ENCODE measurements at regions of chr3 and their contacts with region 1.

Region 1: DNA sequence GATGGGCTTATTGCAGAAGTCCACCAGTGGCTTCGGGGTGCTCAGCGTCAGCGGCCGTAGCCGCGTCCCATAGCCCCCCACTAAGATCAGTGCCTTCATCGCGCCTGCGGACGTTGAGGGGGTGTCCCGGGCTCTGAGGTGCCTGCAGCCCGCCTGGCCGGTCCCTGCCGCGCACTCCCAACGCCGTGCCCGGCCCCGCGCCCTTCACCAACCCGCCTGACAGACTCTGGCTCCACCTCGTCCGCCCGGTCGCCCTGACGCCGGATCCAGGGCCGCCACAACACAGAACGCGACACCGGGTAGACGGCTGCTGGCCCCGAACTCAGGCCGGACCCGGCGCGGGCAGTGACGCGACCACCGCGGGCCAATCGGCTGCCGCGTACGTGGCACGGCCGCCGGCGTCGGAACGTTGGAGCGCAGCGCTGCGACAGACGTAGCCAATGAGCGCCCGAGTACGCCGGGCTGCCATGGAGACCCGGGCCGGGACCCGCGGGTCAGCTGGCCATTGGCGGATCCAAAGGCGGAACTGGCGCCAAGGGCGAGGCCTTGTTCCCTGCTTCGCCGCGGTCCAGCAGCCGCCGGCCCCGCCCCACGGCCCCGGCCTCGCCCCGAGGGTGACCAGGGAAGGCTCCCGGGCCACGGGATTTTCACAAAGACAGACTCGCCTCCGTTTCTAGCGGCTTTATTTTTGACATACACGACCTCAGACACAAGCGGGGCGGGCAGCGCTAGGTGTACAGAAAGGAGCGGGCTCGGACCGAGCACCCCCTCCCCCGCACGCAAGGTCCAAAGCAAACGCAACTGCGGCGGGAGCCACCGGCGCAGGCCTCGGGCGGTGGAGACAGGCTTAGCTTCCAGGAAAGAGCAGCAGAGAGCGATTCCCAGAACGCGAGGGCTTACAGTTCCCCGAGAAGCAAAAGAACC is at the start of gene GMPPB:
- DNase-seq: peak; percentile 89
- ATAC-seq: peak; percentile 79
- H3K4me3 Mint-ChIP-seq: peak within 1 kb of the TSS; percentile 93
- H3K27ac Mint-ChIP-seq: peak within 1 kb of the TSS; percentile 98
- H3K4me1 Mint-ChIP-seq: peaks cover 59% of the 10 kb centered on the region
- H3K27me3 Mint-ChIP-seq: no peaks in the 10 kb centered on the region
- CTCF ChIP-seq: no peak
- total RNA-seq, gene GMPPB: 39.9 and 40.7 TPM in 2 replicates

Region 2: GRCh38 chr3:49673715-49674496 is 50.0 kb before region 1 on chr3 and contains the start of gene APEH:
- CTCF ChIA-PET with region 1: interaction called, 3 read pairs
- POLR2A ChIA-PET with region 1: interaction called, 7 read pairs
- intact Hi-C with region 1: loop called (anchors 1 kb)
- DNase-seq: peak; percentile 98
- ATAC-seq: peak; percentile 88
- H3K4me3 Mint-ChIP-seq: peak within 1 kb of the TSS; percentile 91
- H3K27ac Mint-ChIP-seq: peak within 1 kb of the TSS; percentile 98
- H3K4me1 Mint-ChIP-seq: peaks cover 22% of the 10 kb centered on the region
- H3K27me3 Mint-ChIP-seq: no peaks in the 10 kb centered on the region
- CTCF ChIP-seq: no peak
- total RNA-seq, gene APEH: 109 and 113 TPM in 2 replicates

Region 3: GRCh38 chr3:49747792-49748480 is 24.0 kb after region 1 on chr3:
- CTCF ChIA-PET with region 1: no interaction called
- POLR2A ChIA-PET with region 1: interaction called, 12 read pairs
- intact Hi-C with region 1: no loop called
- DNase-seq: no peak
- ATAC-seq: no peak
- H3K4me3 Mint-ChIP-seq: no peak overlapping the region
- H3K27ac Mint-ChIP-seq: no peak overlapping the region
- H3K4me1 Mint-ChIP-seq: no peaks in the 10 kb centered on the region
- H3K27me3 Mint-ChIP-seq: no peaks in the 10 kb centered on the region
- CTCF ChIP-seq: no peak

Region 4: DNA sequence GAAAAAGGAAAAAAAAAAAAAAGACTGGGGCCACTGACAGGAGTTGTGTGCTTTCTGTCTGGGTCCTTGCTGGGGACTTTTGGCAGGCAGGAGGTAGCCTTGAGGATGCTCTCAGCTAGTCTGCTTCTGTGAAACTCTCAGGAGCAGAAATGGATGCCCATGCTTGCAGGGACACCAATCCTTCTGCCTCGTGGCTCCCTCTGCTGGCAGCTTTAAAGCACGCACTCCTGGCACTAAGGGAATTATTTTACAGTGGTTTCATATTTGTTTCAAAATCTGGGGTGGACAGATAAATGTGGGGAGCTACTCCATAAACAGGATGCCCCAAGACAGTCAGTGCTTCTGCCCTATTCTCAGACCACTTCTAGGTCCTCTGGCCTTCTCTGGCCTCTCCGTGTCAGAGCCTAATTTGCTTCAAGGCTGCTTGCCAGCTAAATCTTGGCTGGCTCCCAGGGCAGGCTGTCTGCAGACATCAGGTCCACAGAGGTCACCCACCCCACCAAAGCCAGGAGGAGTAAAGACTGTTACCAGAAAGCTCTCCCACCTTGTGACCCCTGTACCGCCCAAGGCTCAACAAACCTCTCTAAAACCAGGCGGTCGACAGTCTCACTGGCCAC is 115.4 kb after region 1 on chr3:
- CTCF ChIA-PET with region 1: interaction called, 8 read pairs
- POLR2A ChIA-PET with region 1: interaction called, 4 read pairs
- intact Hi-C with region 1: loop called (anchors 1 kb)
- DNase-seq: peak; percentile 65
- ATAC-seq: peak; percentile 97
- H3K4me3 Mint-ChIP-seq: no peak overlapping the region
- H3K27ac Mint-ChIP-seq: peak overlapping the region; percentile 24
- H3K4me1 Mint-ChIP-seq: peaks cover 5% of the 10 kb centered on the region
- H3K27me3 Mint-ChIP-seq: no peaks in the 10 kb centered on the region
- CTCF ChIP-seq: peak; percentile 17

Region 5: DNA sequence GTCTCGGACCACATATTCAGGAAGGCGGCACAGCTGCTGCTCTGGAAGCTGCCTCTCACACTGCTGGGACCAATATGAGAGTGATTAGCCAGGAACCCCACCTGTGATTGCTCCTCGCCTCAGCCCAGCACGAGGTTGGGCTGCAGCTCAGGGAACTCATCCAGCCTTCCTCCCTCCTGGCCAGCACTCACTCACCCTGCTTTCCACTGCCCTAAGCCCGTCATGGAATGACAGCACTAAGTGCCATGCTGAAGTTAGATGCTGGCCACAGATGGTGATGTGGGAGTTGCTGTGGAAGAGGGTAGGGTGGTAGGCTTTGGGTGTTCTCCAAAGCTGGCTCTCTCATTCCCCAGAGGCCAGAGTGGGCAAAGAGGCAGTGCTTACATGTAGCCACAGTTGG is 172.5 kb after region 1 on chr3:
- CTCF ChIA-PET with region 1: no interaction called
- POLR2A ChIA-PET with region 1: no interaction called
- intact Hi-C with region 1: no loop called
- DNase-seq: no peak
- ATAC-seq: no peak
- H3K4me3 Mint-ChIP-seq: no peak overlapping the region
- H3K27ac Mint-ChIP-seq: no peak overlapping the region
- H3K4me1 Mint-ChIP-seq: no peaks in the 10 kb centered on the region
- H3K27me3 Mint-ChIP-seq: no peaks in the 10 kb centered on the region
- CTCF ChIP-seq: no peak

Region 6: DNA sequence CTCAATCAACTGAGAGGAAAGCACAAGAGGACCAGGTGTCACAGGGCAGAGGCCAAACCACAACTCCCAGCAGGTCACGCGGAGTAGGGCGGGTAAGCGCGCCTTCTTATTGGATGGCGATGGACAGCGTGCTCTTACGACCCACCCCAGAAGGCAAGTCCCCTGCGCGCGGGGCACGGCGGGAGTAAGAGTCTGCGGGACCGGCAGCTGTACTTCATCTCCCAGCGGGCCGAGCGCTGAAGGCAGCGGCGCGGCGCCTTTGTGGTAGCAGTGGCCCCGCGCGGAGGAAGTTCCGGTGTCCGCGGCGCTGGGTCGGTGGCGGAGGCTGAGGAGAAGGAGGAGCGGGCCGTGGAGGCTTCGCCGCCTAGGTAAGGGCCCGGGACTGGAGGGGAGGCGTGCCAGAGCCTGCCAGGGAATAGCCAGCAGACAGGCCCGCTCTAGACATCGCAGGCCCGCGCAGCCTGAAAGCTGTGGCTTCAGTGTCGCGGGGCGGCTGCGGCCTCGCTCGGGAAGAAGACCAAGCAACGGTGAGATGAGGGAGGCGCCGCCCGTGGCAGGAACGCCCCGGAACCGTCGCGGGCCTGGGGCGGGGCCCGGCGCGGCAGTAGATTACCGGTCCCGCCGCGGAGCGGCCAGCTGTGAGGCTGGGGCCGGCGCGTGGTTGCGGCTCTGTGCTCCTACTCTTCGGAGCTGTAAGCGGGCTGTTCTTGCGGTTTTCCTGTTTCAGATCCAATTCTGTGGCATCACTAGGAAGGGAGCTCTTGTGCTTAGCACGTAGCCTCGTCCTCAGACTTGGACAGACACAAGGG is 216.2 kb after region 1 on chr3 and contains the start of gene RBM6:
- CTCF ChIA-PET with region 1: no interaction called
- POLR2A ChIA-PET with region 1: no interaction called
- intact Hi-C with region 1: loop called (anchors 1 kb)
- DNase-seq: peak; percentile 89
- ATAC-seq: peak; percentile 93
- H3K4me3 Mint-ChIP-seq: peak within 1 kb of the TSS; percentile 98
- H3K27ac Mint-ChIP-seq: peak within 1 kb of the TSS; percentile 97
- H3K4me1 Mint-ChIP-seq: peaks cover 43% of the 10 kb centered on the region
- H3K27me3 Mint-ChIP-seq: no peaks in the 10 kb centered on the region
- CTCF ChIP-seq: no peak
- total RNA-seq, gene RBM6: 160 and 172 TPM in 2 replicates

Region 7: GRCh38 chr3:49992326-49992725 is 268.4 kb after region 1 on chr3:
- CTCF ChIA-PET with region 1: no interaction called
- POLR2A ChIA-PET with region 1: no interaction called
- intact Hi-C with region 1: no loop called
- DNase-seq: no peak
- ATAC-seq: no peak
- H3K4me3 Mint-ChIP-seq: no peak overlapping the region
- H3K27ac Mint-ChIP-seq: no peak overlapping the region
- H3K4me1 Mint-ChIP-seq: no peaks in the 10 kb centered on the region
- H3K27me3 Mint-ChIP-seq: no peaks in the 10 kb centered on the region
- CTCF ChIP-seq: no peak

Region 8: DNA sequence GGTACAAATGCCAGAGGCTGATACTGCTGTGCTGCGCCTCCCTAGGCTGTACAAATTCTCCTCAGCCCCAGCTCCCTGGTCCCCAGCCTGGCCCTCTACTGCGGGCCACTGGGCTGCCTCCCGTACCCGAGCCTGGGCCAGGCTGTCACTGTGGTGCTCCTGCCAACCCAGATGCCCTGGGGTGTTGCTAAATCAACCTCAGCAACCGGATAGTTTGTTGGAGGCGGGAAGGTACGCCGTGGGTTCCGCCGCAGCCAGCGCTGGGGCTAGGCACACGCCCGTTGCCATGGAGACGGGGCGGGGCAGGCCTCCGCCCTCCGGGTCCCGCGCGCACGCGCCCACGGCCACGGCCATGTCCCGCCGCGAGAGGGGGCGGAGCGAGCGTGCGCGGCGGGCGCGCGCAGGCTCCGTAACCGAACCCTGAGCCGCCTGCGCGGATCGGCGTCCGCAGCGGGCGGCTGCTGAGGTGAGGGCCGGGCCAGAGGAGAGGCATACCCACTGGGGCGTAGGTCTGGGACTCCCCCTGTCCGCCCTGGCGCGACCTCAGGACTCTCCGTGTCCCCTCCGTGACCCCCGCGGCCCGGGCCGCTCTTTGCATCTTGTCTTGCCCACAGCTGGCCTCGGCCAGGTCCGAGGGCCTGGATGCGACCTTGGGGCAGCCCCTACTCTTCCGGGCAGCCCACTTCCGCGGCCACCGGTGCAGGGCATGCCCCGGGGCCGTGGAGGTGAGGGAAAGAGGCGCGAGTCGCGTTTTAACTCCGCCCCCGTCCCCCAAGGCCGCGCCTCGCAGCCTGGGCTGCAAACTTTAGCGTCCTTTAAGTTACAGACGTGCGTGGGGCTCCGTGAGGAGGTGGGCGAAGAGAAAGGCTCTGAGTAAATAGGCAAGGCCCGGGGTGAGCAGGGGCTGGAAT is 1947.2 kb after region 1 on chr3 and contains the start of gene TEX264:
- CTCF ChIA-PET with region 1: no interaction called
- POLR2A ChIA-PET with region 1: no interaction called
- intact Hi-C with region 1: loop called (anchors 5 kb)
- DNase-seq: peak; percentile 95
- ATAC-seq: peak; percentile 85
- H3K4me3 Mint-ChIP-seq: peak within 1 kb of the TSS; percentile 89
- H3K27ac Mint-ChIP-seq: peak within 1 kb of the TSS; percentile 89
- H3K4me1 Mint-ChIP-seq: peaks cover 55% of the 10 kb centered on the region
- H3K27me3 Mint-ChIP-seq: no peaks in the 10 kb centered on the region
- CTCF ChIP-seq: no peak
- total RNA-seq, gene TEX264: 24.1 and 24.4 TPM in 2 replicates